CD8-positive, alpha-beta T cell (primary cell): ENCODE measurements at regions of chr15 and their contacts with region 1.

Region 1: DNA sequence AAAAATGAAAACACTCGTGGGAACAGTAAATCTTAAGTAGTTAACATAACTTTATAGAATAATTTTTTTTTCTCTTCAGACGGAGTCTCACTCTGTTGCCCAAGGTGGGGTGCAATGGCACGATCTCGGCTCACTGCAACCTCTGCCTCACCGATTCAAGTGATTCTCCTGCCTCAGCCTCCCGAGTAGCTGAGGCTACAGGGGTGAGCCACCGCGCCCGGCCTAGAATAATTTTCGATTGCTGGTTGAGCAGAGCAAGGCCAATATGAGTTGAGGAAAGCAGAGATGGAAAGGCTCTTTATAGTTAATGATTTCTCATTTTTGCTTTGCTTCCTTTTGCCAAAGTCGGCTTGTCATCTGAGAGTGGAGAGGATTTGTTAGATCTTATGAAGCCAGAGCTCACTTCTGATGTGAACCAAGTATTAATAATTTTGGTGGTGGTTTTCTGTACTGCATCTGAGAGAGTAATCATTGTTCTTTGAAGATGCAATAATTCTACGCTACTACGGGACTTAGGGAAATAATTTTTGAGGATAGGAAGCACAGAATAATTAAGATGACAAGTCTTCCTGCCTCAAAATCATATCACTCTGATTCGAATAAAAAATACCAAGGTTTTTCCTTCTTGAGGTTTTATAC is 1.6 kb upstream of the GOLM2 start:
- DNase-seq: peak in 2 of 9 experiments; percentile 7 to 36
- ATAC-seq: no peak
- H3K4me3 ChIP-seq: peak overlapping the region; percentile 77 to 91
- H3K4me3 Mint-ChIP-seq: peak overlapping the region; percentile 94
- H3K27ac ChIP-seq: peak overlapping the region; percentile 95 to 97
- H3K27ac Mint-ChIP-seq: peak overlapping the region; percentile 98
- H3K4me1 ChIP-seq: peaks cover 26% of the 10 kb centered on the region
- H3K4me1 Mint-ChIP-seq: peaks cover 42% of the 10 kb centered on the region
- H3K27me3 ChIP-seq: no peaks in the 10 kb centered on the region
- H3K27me3 Mint-ChIP-seq: peaks cover 2% of the 10 kb centered on the region
- CTCF ChIP-seq: peak; percentile 36

Region 2: GRCh38 chr15:43492673-43493601 is 794.0 kb before region 1 on chr15 and contains the start of gene TP53BP1:
- CTCF ChIA-PET with region 1: no interaction called
- POLR2A ChIA-PET with region 1: no interaction called
- intact Hi-C with region 1: loop called in 1 of 2 experiments (anchors 5 kb)
- DNase-seq: peak; percentile 87 to 97 (median 94)
- ATAC-seq: peak; percentile 98
- H3K4me3 ChIP-seq: peak within 1 kb of the TSS; percentile 87 to 92
- H3K4me3 Mint-ChIP-seq: peak within 1 kb of the TSS; percentile 99
- H3K27ac ChIP-seq: peak within 1 kb of the TSS; percentile 95 to 96
- H3K27ac Mint-ChIP-seq: peak within 1 kb of the TSS; percentile 98
- H3K4me1 ChIP-seq: peaks cover 24% of the 10 kb centered on the region
- H3K4me1 Mint-ChIP-seq: peaks cover 32% of the 10 kb centered on the region
- H3K27me3 ChIP-seq: no peaks in the 10 kb centered on the region
- H3K27me3 Mint-ChIP-seq: no peaks in the 10 kb centered on the region
- CTCF ChIP-seq: no peak
- total RNA-seq, gene TP53BP1: 54.6 to 59.7 TPM

Region 3: DNA sequence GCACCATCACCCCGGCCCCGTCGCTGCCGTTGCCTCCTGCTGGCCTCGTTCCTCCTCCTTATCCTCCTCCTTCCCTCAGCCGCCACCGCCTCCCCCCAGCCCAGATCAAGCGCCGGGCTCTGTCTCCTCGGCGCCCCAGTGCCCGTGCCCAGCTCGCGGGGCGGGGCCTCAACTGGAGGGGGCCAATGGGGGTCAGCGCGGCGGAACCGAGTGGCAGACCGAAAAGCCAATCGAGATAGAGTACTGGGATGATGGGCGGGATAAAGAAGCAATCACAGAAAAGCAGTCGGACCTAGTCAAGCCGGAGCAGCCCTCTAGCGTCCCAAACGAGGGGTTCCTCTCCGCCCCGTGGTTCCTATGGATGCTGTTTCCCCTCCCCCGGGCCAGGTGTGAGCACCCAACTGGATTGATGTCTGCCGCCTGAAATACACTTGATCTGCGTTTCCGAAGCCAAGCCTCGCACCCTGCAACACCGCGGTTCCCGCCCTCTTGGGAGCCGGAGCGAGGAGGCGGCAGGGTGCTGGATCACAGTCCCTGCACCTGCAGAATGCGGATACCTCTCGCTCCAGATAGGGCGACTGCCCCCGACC is 91.7 kb before region 1 on chr15 and contains the start of gene FRMD5:
- CTCF ChIA-PET with region 1: no interaction called
- POLR2A ChIA-PET with region 1: interaction called, 4 read pairs
- intact Hi-C with region 1: loop called in 1 of 2 experiments (anchors 1 kb)
- DNase-seq: peak; percentile 71 to 92 (median 84)
- ATAC-seq: peak; percentile 97
- H3K4me3 ChIP-seq: peak within 1 kb of the TSS; percentile 49 to 76
- H3K4me3 Mint-ChIP-seq: peak within 1 kb of the TSS; percentile 90
- H3K27ac ChIP-seq: no peak within 1 kb of the TSS
- H3K27ac Mint-ChIP-seq: no peak within 1 kb of the TSS
- H3K4me1 ChIP-seq: peaks cover 16% of the 10 kb centered on the region
- H3K4me1 Mint-ChIP-seq: peaks cover 19% of the 10 kb centered on the region
- H3K27me3 ChIP-seq: peaks cover 14% of the 10 kb centered on the region in 2 experiments
- H3K27me3 Mint-ChIP-seq: peaks cover 58% of the 10 kb centered on the region
- CTCF ChIP-seq: no peak
- total RNA-seq, gene FRMD5: not detected

Region 4: GRCh38 chr15:44426975-44427755 is 140.2 kb after region 1 on chr15 and contains the start of gene CTDSPL2:
- CTCF ChIA-PET with region 1: interaction called, 3 read pairs
- POLR2A ChIA-PET with region 1: interaction called, 35 read pairs
- intact Hi-C with region 1: loop called (anchors 1 kb)
- DNase-seq: peak; percentile 88 to 97 (median 93)
- ATAC-seq: peak; percentile 95
- H3K4me3 ChIP-seq: peak within 1 kb of the TSS; percentile 61 to 83
- H3K4me3 Mint-ChIP-seq: peak within 1 kb of the TSS; percentile 98
- H3K27ac ChIP-seq: peak within 1 kb of the TSS; percentile 86
- H3K27ac Mint-ChIP-seq: peak within 1 kb of the TSS; percentile 98
- H3K4me1 ChIP-seq: peaks cover 25% of the 10 kb centered on the region
- H3K4me1 Mint-ChIP-seq: peaks cover 46% of the 10 kb centered on the region
- H3K27me3 ChIP-seq: no peaks in the 10 kb centered on the region
- H3K27me3 Mint-ChIP-seq: no peaks in the 10 kb centered on the region
- CTCF ChIP-seq: no peak
- total RNA-seq, gene CTDSPL2: 103 to 104 TPM

Region 5: GRCh38 chr15:44662478-44663408 is 375.8 kb after region 1 on chr15:
- CTCF ChIA-PET with region 1: no interaction called
- POLR2A ChIA-PET with region 1: no interaction called
- intact Hi-C with region 1: no loop called
- DNase-seq: peak; percentile 75 to 95 (median 86)
- ATAC-seq: peak; percentile 68
- H3K4me3 ChIP-seq: peak overlapping the region; percentile 52 to 80
- H3K4me3 Mint-ChIP-seq: peak overlapping the region; percentile 99
- H3K27ac ChIP-seq: peak overlapping the region; percentile 82 to 96
- H3K27ac Mint-ChIP-seq: peak overlapping the region; percentile 96
- H3K4me1 ChIP-seq: peaks cover 50% of the 10 kb centered on the region
- H3K4me1 Mint-ChIP-seq: peaks cover 60% of the 10 kb centered on the region
- H3K27me3 ChIP-seq: no peaks in the 10 kb centered on the region
- H3K27me3 Mint-ChIP-seq: no peaks in the 10 kb centered on the region
- CTCF ChIP-seq: no peak

Region 6: DNA sequence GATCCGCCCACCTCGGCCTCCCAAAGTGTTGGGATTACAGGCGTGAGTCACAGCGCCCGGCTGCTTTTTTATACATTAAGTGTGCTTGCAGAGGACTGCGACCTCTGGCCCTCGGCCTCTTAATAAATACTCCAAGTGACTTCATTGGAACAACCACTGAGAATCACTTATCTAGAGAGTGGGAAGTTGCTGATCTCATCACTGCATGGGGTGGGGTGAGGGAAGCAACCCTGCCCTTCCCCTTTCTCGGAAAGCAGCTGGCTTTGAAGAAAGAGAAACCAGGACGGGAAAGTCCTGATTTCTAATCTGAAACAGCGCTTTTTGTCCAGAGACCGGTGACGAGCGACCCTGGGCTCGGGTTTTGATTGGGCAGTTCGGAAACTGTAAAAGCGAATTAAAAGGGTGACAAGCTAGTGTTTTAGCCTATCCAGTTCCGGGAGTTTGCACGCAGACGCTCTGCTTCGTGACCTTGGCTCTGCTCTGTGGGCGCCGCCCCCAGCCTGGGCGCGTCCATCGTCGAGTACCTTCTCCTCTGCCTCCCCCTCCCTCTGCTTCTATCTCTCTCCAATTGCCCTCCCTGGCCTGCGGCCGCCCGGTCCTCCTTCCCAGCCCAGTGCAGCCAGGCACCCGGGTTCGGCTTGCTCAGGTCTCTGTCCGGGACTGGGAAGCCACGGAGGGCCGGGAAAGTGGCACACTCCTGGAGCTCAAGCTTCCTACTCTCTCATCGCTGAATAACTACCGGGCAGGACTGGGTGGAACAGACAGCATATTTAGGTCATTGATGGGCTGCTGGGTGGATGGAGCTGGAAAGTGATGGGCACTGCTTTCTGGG is 441.9 kb after region 1 on chr15:
- CTCF ChIA-PET with region 1: no interaction called
- POLR2A ChIA-PET with region 1: no interaction called
- intact Hi-C with region 1: no loop called
- DNase-seq: peak; percentile 88 to 98 (median 95)
- ATAC-seq: peak; percentile 77
- H3K4me3 ChIP-seq: peak overlapping the region; percentile 84 to 95
- H3K4me3 Mint-ChIP-seq: peak overlapping the region; percentile 99
- H3K27ac ChIP-seq: peak overlapping the region; percentile 93 to 95
- H3K27ac Mint-ChIP-seq: peak overlapping the region; percentile 100
- H3K4me1 ChIP-seq: peaks cover 75% of the 10 kb centered on the region
- H3K4me1 Mint-ChIP-seq: peaks cover 80% of the 10 kb centered on the region
- H3K27me3 ChIP-seq: no peaks in the 10 kb centered on the region
- H3K27me3 Mint-ChIP-seq: no peaks in the 10 kb centered on the region
- CTCF ChIP-seq: no peak

Region 7: GRCh38 chr15:44763187-44763586 is 476.3 kb after region 1 on chr15:
- CTCF ChIA-PET with region 1: no interaction called
- POLR2A ChIA-PET with region 1: no interaction called
- intact Hi-C with region 1: no loop called
- DNase-seq: no peak
- ATAC-seq: no peak
- H3K4me3 ChIP-seq: no peak overlapping the region
- H3K4me3 Mint-ChIP-seq: no peak overlapping the region
- H3K27ac ChIP-seq: no peak overlapping the region
- H3K27ac Mint-ChIP-seq: no peak overlapping the region
- H3K4me1 ChIP-seq: no peaks in the 10 kb centered on the region
- H3K4me1 Mint-ChIP-seq: no peaks in the 10 kb centered on the region
- H3K27me3 ChIP-seq: no peaks in the 10 kb centered on the region
- H3K27me3 Mint-ChIP-seq: no peaks in the 10 kb centered on the region
- CTCF ChIP-seq: no peak

Region 8: GRCh38 chr15:45022871-45023658 is 736.1 kb after region 1 on chr15 and contains the start of gene SORD:
- CTCF ChIA-PET with region 1: no interaction called
- POLR2A ChIA-PET with region 1: no interaction called
- intact Hi-C with region 1: loop called in 1 of 2 experiments (anchors 5 kb)
- DNase-seq: peak; percentile 75 to 92 (median 90)
- ATAC-seq: peak; percentile 99
- H3K4me3 ChIP-seq: peak within 1 kb of the TSS; percentile 74 to 92
- H3K4me3 Mint-ChIP-seq: peak within 1 kb of the TSS; percentile 88
- H3K27ac ChIP-seq: no peak within 1 kb of the TSS
- H3K27ac Mint-ChIP-seq: peak within 1 kb of the TSS; percentile 69
- H3K4me1 ChIP-seq: peaks cover 12% of the 10 kb centered on the region
- H3K4me1 Mint-ChIP-seq: peaks cover 36% of the 10 kb centered on the region
- H3K27me3 ChIP-seq: no peaks in the 10 kb centered on the region
- H3K27me3 Mint-ChIP-seq: peaks cover 13% of the 10 kb centered on the region
- CTCF ChIP-seq: no peak
- total RNA-seq, gene SORD: 1.2 to 1.4 TPM